PC-3 (cell line): ENCODE measurements at regions of chr19 and their contacts with region 1.

Region 1: DNA sequence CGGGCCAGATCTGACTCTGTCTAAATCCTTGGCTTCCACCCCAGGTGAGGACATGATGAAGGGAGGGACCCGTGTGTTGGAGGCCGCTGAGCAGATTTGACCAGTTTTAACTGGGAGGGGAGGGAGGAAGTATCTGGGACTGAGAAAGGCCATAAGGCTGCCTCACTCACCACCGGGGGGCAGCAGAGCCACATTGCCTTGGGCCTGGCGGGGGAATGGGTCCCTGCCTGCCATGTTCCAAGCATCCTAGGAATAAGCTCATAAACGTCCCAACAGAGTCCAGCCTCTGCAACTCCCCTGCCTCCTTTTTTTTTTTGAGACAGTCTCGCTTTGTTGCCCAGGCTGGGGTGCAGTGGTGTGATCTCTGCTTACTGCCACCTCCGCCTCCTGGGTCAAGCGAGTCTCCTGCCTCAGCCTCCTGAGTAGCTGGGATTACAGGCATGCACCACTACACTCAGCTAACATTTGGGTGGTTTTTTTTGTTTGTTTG is 15.5 kb downstream of the MAST3 start:
- DNase-seq: peak; percentile 83
- ATAC-seq: peak; percentile 68
- H3K4me3 ChIP-seq: no peak overlapping the region
- H3K27ac ChIP-seq: no peak overlapping the region
- H3K4me1 ChIP-seq: peaks cover 14% of the 10 kb centered on the region; the same call in 1 of the 2 replicates
- H3K27me3 ChIP-seq: no peaks in the 10 kb centered on the region
- CTCF ChIP-seq: peak; percentile 87

Region 2: DNA sequence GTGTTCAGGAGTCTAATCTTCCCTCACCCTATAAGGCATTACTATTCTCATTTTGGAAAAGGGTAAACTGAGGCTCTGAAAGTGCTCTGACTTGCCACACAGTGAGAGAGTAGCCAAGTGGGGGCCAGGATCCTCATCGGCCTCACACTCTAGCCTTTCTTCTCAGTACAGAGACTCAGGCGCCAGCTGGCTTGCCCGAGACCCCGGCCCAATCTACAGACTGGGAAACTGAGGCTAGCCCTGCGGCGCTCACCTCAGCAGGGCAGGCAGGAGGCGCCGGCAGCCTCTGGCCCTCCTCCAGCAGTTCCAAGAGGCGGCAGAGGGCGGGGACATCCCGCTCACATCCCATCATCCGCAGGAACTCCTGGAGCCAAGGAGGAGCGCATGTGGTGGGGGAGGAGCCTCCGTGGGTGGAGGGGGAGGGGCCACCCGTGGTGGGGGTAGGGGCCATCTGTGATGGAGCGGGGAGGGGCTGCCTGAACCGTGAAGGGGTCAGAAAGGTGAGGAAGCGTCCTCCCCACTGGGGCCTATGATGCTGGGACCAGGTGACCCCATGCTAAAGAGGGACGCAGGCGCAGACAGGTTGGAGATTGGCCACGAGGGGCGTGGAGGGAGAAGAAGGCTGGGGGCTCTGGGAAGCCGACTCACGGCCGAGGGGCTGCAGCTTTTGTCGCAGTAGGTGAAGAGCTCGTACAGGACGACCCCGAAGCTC is 283.0 kb before region 1 on chr19:
- CTCF ChIA-PET with region 1: no interaction called
- POLR2A ChIA-PET with region 1: no interaction called
- intact Hi-C with region 1: no loop called
- DNase-seq: peak; percentile 84
- ATAC-seq: peak; percentile 70
- H3K4me3 ChIP-seq: peak overlapping the region; percentile 70
- H3K27ac ChIP-seq: peak overlapping the region; percentile 47
- H3K4me1 ChIP-seq: peaks cover 10% of the 10 kb centered on the region; the same call in 1 of the 2 replicates
- H3K27me3 ChIP-seq: no peaks in the 10 kb centered on the region
- CTCF ChIP-seq: no peak; the same call in 1 of the 2 replicates

Region 3: DNA sequence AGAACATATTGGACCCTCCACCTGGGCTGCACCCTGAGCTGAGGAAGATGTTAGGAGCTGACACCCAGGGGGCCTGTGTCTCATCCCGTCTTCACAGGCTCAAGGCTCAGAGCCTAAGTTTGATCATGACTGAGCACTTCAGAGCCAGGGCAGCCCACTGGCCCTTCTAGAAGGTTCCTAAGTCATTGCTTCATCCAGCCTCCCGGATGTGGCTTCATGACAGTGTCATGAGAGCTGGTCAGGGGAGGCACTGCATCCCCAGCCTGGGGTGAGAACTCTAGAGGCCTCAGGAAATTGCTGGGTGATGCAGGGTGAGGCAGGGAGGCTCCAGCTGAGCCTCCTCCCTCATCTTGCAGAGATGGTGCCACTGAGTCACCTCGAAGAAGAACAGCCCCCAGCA is 15.0 kb after region 1 on chr19:
- CTCF ChIA-PET with region 1: no interaction called
- POLR2A ChIA-PET with region 1: no interaction called
- intact Hi-C with region 1: no loop called
- DNase-seq: peak; percentile 35
- ATAC-seq: no peak
- H3K4me3 ChIP-seq: no peak overlapping the region
- H3K27ac ChIP-seq: no peak overlapping the region
- H3K4me1 ChIP-seq: no peaks in the 10 kb centered on the region
- H3K27me3 ChIP-seq: no peaks in the 10 kb centered on the region
- CTCF ChIP-seq: no peak

Region 4: DNA sequence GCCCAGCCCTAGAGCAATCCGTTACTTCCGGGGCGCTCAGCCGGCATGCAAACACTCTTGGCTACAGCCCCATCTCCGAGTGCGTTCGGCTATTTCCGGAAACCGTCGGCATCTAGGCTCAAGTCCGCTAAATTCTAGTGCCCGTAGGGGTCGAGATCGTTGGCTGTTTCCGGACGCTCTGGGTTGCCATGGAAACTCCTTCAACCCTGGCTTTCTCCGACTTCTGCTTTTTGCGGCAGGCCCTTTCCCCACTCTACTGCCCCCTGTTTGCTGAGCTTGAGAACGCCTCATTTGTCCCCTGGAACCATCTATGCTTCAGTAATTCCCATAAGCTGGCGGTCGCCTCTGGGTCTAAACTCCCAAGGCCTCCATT is 39.4 kb after region 1 on chr19:
- CTCF ChIA-PET with region 1: interaction called, 13 read pairs
- POLR2A ChIA-PET with region 1: no interaction called
- intact Hi-C with region 1: loop called (anchors 1 kb)
- DNase-seq: peak; percentile 96
- ATAC-seq: peak; percentile 57
- H3K4me3 ChIP-seq: peak overlapping the region; percentile 80
- H3K27ac ChIP-seq: peak overlapping the region; percentile 46
- H3K4me1 ChIP-seq: peaks cover 18% of the 10 kb centered on the region
- H3K27me3 ChIP-seq: no peaks in the 10 kb centered on the region
- CTCF ChIP-seq: peak; percentile 66

Region 5: DNA sequence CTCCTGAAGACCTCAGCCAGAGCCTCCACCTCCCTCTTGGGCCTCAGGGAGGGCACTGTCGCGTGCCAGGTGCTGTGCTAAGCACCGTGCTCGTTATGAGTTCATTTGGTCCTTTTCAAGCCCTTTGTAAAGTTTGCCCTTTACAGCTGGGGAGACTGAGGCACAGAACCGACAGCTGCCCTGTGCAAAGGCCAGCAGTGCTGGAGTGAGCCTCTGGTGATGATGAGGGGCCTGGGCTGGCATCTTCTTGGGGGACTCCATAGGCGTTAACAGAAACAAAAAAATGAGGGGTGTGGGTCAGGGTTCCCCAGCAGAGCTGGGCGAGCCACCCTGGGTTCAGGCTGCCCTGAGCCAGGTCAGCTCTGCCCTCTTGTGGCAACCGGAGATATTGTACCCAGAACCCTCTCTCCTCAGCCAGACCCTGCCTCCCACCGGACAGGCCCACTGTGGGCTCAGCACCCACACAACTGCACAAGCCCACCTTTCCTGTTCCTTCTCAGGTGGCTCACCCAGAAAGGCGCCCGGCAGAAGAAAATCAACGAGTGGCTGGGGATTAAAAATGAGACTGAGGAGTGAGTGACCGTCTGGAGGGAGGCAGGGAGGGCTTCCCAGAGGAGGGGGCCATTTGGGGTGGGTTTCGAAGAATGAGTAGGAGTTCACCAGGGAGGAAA is 55.1 kb after region 1 on chr19:
- CTCF ChIA-PET with region 1: interaction called, 3 read pairs
- POLR2A ChIA-PET with region 1: no interaction called
- intact Hi-C with region 1: loop called (anchors 1 kb)
- DNase-seq: peak; percentile 53
- ATAC-seq: peak; percentile 83
- H3K4me3 ChIP-seq: no peak overlapping the region
- H3K27ac ChIP-seq: no peak overlapping the region
- H3K4me1 ChIP-seq: no peaks in the 10 kb centered on the region
- H3K27me3 ChIP-seq: no peaks in the 10 kb centered on the region
- CTCF ChIP-seq: peak; percentile 81

Region 6: DNA sequence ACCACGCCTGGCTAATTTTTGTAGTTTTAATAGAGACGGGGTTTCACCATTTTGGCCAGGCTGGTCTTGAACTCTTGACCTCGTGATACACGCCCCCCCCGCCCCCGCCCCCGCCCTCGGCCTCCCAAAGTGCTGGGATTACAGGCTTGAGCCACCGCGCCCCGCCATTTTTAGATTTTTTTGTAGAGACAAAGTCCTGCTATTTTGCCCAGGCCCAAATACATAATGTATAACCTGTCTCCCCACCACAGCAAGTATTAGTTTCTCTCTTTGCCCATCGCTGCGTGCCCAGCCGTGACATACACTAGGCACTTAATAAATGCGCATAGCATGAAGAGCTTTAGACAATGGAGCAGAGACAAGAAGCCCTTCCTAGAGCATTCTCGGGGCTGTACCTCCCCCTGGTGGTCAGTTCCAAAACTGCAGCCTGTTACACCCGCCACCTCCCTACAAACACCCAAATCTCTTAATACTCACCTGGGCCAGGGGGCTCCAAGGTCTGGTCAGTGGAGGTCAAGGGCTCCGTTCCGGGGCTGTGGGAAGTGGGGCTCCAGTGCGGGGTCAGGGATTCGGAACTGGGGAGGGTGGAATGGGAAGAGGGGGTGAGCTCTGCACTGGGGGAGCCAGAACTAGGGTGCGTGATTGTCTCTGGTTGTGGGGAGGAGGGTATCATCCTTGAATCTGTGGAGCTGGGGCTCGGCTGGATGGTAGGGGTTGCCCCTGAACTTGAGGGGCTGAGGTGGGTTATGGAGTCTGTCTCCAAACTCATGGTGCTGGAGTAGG is 138.7 kb after region 1 on chr19:
- CTCF ChIA-PET with region 1: interaction called, 6 read pairs
- POLR2A ChIA-PET with region 1: no interaction called
- intact Hi-C with region 1: loop called (anchors 1 kb)
- DNase-seq: peak; percentile 87
- ATAC-seq: peak; percentile 77
- H3K4me3 ChIP-seq: no peak overlapping the region
- H3K27ac ChIP-seq: no peak overlapping the region
- H3K4me1 ChIP-seq: peaks cover 12% of the 10 kb centered on the region
- H3K27me3 ChIP-seq: no peaks in the 10 kb centered on the region
- CTCF ChIP-seq: peak; percentile 94